Naive thymus-derived CD4-positive, alpha-beta T cell (primary cell): ENCODE measurements at regions of chr12 and their contacts with region 1.

Region 1: GRCh38 chr12:122356192-122356635 is 66.3 kb downstream of the CLIP1 start:
- DNase-seq: peak in 8 of 9 donors; percentile 31 to 58 (median 41)
- ATAC-seq: peak; percentile 86
- H3K4me3 ChIP-seq: no peak overlapping the region
- H3K4me3 Mint-ChIP-seq: no peak overlapping the region
- H3K27ac ChIP-seq: no peak overlapping the region
- H3K27ac Mint-ChIP-seq: peak overlapping the region in 5 of 9 donors; percentile 13 to 59 (median 35)
- H3K4me1 ChIP-seq: no peaks in the 10 kb centered on the region
- H3K4me1 Mint-ChIP-seq: peaks cover 0 to 7% (median 4%) of the 10 kb centered on the region in 7 donors
- H3K27me3 ChIP-seq: no peaks in the 10 kb centered on the region
- H3K27me3 Mint-ChIP-seq: no peaks in the 10 kb centered on the region

Region 2: GRCh38 chr12:122051231-122051876 is 304.9 kb before region 1 on chr12:
- CTCF ChIA-PET with region 1: no interaction called
- POLR2A ChIA-PET with region 1: no interaction called
- intact Hi-C with region 1: loop called (anchors 1 kb)
- DNase-seq: no peak
- ATAC-seq: no peak
- H3K4me3 ChIP-seq: no peak overlapping the region
- H3K4me3 Mint-ChIP-seq: no peak overlapping the region
- H3K27ac ChIP-seq: no peak overlapping the region
- H3K27ac Mint-ChIP-seq: no peak overlapping the region
- H3K4me1 ChIP-seq: no peaks in the 10 kb centered on the region
- H3K4me1 Mint-ChIP-seq: peaks cover 0 to 7% (median 5%) of the 10 kb centered on the region in 7 donors
- H3K27me3 ChIP-seq: no peaks in the 10 kb centered on the region
- H3K27me3 Mint-ChIP-seq: no peaks in the 10 kb centered on the region

Region 3: DNA sequence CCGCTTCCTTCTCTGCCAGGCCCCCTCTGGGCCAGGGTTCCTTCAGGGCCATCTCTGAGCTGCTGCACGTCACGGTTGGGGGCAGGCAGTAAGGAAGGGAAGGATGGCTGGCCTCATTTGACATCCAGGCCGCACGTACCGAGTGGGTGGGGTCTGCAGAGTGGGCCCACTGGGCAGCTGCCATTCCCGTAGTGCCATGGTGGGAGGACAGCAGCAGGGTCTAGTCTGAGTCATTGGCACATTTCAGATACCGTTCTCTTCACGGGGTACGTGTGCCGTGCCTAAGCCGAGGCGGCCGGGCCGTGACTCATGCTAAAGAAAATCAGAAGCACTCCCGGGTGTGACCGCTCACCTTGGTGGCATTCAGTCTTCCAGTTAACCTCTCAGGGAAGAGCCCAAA is 226.1 kb before region 1 on chr12:
- CTCF ChIA-PET with region 1: no interaction called
- POLR2A ChIA-PET with region 1: no interaction called
- intact Hi-C with region 1: loop called in 1 of 2 experiments (anchors 2 kb)
- DNase-seq: no peak
- ATAC-seq: no peak
- H3K4me3 ChIP-seq: no peak overlapping the region
- H3K4me3 Mint-ChIP-seq: no peak overlapping the region
- H3K27ac ChIP-seq: no peak overlapping the region
- H3K27ac Mint-ChIP-seq: no peak overlapping the region
- H3K4me1 ChIP-seq: no peaks in the 10 kb centered on the region
- H3K4me1 Mint-ChIP-seq: peaks cover 3 to 14% (median 14%) of the 10 kb centered on the region in 7 donors
- H3K27me3 ChIP-seq: no peaks in the 10 kb centered on the region
- H3K27me3 Mint-ChIP-seq: no peaks in the 10 kb centered on the region

Region 4: DNA sequence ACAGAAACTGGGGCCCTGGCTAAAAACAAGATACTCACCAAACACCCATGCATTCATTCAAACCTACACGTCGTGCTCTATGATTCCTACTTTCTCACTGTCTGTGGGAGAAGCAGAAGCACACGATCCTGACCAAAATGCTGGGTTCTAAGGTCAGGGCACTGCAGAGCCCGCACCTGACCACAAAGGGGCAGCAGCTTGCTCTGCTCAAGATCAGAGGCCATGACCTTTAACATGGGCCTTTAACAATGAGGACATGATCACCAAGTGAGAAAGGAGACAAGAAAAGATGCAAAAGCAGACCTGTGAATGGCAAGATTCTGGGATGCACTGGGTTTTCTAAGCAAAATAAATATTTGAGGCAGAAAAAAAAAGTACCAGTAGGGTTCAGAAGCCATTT is 49.8 kb before region 1 on chr12:
- CTCF ChIA-PET with region 1: interaction called, 5 read pairs
- POLR2A ChIA-PET with region 1: no interaction called
- intact Hi-C with region 1: loop called in 1 of 2 experiments (anchors 1 kb)
- DNase-seq: no peak
- ATAC-seq: no peak
- H3K4me3 ChIP-seq: no peak overlapping the region
- H3K4me3 Mint-ChIP-seq: no peak overlapping the region
- H3K27ac ChIP-seq: no peak overlapping the region
- H3K27ac Mint-ChIP-seq: no peak overlapping the region
- H3K4me1 ChIP-seq: no peaks in the 10 kb centered on the region
- H3K4me1 Mint-ChIP-seq: peaks cover 0 to 2% (median 0%) of the 10 kb centered on the region in 7 donors
- H3K27me3 ChIP-seq: no peaks in the 10 kb centered on the region
- H3K27me3 Mint-ChIP-seq: no peaks in the 10 kb centered on the region

Region 5: GRCh38 chr12:122336015-122336946 is 19.9 kb before region 1 on chr12:
- CTCF ChIA-PET with region 1: interaction called, 6 read pairs
- POLR2A ChIA-PET with region 1: no interaction called
- intact Hi-C with region 1: loop called in 1 of 2 experiments (anchors 1 kb)
- DNase-seq: peak in 8 of 9 donors; percentile 16 to 43 (median 33)
- ATAC-seq: peak; percentile 57
- H3K4me3 ChIP-seq: no peak overlapping the region
- H3K4me3 Mint-ChIP-seq: peak overlapping the region in 2 of 10 donors; percentile 21 to 32
- H3K27ac ChIP-seq: no peak overlapping the region
- H3K27ac Mint-ChIP-seq: peak overlapping the region in 7 of 9 donors; percentile 38 to 82 (median 71)
- H3K4me1 ChIP-seq: no peaks in the 10 kb centered on the region
- H3K4me1 Mint-ChIP-seq: peaks cover 5 to 18% (median 12%) of the 10 kb centered on the region in 7 donors
- H3K27me3 ChIP-seq: no peaks in the 10 kb centered on the region
- H3K27me3 Mint-ChIP-seq: no peaks in the 10 kb centered on the region

Region 6: GRCh38 chr12:122449353-122449752 is 93.1 kb after region 1 on chr12:
- CTCF ChIA-PET with region 1: no interaction called
- POLR2A ChIA-PET with region 1: no interaction called
- intact Hi-C with region 1: no loop called
- DNase-seq: no peak
- ATAC-seq: peak; percentile 26
- H3K4me3 ChIP-seq: no peak overlapping the region
- H3K4me3 Mint-ChIP-seq: no peak overlapping the region
- H3K27ac ChIP-seq: no peak overlapping the region
- H3K27ac Mint-ChIP-seq: no peak overlapping the region
- H3K4me1 ChIP-seq: peaks cover 21 to 22% of the 10 kb centered on the region in 2 donors
- H3K4me1 Mint-ChIP-seq: peaks cover 20 to 25% (median 25%) of the 10 kb centered on the region in 7 donors
- H3K27me3 ChIP-seq: no peaks in the 10 kb centered on the region
- H3K27me3 Mint-ChIP-seq: no peaks in the 10 kb centered on the region